PC-9 (cell line): ENCODE measurements at regions of chr11 and their contacts with region 1.

Region 1: GRCh38 chr11:34034043-34034442 is 17.5 kb upstream of the CAPRIN1 start:
- DNase-seq: peak; percentile 50 to 53
- H3K4me3 ChIP-seq: no peak overlapping the region
- H3K27ac ChIP-seq: no peak overlapping the region
- H3K4me1 ChIP-seq: peaks cover 5% of the 10 kb centered on the region; the same call in 1 of the 2 replicates
- H3K27me3 ChIP-seq: no peaks in the 10 kb centered on the region
- CTCF ChIP-seq: no peak

Region 2: DNA sequence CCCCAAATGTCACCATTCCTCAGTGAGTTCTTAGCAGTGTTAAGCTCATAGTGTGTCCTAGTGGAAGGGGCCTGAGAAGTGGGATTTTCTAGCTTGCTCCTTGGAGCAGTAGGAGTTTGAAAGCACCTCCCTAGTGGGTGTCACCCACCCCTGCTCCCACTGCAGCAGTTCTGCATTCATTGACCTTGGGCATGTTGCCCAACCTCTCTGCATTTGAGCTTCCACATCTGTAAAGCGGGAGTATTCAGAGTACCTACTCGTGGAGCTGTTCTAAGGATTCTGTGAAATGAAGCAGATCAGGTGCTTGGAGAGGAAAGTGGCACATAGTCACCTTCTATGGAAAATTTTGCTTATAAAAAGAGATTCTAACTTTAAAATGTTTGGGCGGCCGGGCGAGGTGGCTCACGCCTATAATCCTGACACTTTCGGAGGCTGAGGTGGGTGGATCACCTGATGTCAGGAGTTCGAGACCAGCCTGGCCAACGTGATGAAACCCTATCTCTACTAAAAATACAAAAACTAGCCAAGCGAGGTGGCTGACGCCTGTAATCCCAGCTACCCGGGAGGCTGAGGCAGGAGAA is 159.0 kb before region 1 on chr11:
- CTCF ChIA-PET with region 1: no interaction called
- POLR2A ChIA-PET with region 1: no interaction called
- intact Hi-C with region 1: no loop called
- DNase-seq: no peak
- H3K4me3 ChIP-seq: no peak overlapping the region
- H3K27ac ChIP-seq: no peak overlapping the region
- H3K4me1 ChIP-seq: no peaks in the 10 kb centered on the region
- H3K27me3 ChIP-seq: peaks cover 61% of the 10 kb centered on the region
- CTCF ChIP-seq: no peak

Region 3: DNA sequence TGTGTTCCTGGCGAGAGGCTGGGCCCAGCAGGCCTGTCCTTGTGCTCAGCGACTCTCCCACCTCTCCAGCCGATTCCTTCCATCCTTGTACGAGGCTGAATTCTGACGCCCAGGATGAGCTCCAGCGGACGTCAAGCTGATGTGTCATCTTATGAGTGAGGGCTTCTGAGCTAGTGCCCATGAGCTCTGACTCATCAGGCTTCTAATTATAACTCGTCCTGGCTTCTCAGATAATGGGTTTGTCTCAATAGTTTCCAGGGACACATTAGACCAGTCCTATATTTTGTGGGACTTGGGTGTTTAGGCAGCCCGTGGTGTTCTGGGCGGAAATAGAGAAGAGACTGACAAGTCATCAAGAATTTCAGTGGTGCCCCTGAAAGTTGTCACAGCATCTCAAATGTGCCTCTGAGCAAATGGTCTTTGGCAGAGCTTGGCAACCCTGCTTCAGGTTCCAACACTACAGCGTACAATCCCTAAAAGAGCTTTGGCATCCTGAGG is 996.7 kb after region 1 on chr11:
- CTCF ChIA-PET with region 1: no interaction called
- POLR2A ChIA-PET with region 1: interaction called, 11 read pairs
- intact Hi-C with region 1: no loop called
- DNase-seq: peak; percentile 66 to 95
- H3K4me3 ChIP-seq: peak overlapping the region; percentile 8; the same call in 1 of the 2 replicates
- H3K27ac ChIP-seq: peak overlapping the region; percentile 85
- H3K4me1 ChIP-seq: peaks cover 49% of the 10 kb centered on the region
- H3K27me3 ChIP-seq: no peaks in the 10 kb centered on the region
- CTCF ChIP-seq: no peak